MCF 10A (cell line): ENCODE measurements at regions of chr1 and their contacts with region 1.

Region 1: DNA sequence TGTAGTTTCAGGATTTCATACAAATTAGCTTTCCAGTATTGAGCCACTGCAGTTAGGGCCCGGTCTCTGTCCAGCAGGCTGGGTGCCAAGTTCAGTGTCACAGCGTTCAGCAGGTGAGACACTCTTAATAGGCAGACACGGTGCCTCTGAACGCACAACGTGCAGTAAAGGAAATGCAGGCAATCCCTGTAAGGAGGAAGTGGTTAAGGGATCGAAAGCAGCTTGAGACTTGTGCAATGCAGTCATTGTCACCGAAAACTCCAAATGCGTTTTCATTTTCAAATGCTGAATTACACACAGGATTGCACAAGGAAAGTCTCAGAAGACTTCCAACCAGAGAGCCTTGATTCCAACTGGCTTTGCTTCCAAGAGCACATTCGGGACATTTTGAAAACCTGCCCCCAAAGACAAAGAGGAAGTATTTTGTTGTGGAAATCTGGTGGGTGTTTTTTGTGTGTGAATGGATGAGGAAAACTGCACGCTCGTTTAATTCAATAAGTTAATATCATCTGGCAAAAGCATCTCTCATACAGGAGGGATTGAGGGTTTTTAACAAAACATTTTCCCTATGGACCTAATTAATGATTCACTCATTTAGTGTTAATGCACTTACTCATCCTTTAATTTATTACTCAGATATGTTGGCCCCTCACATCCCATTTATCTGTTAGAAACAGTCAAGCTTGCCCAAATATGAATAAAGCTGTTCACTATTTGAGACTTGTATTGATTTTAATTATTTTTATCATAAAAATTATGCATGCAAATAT is 61.6 kb downstream of the PTGS2 start:
- DNase-seq: peak; percentile 74
- H3K4me3 Mint-ChIP-seq: peak overlapping the region; percentile 56
- H3K27ac Mint-ChIP-seq: peak overlapping the region; percentile 46
- H3K4me1 Mint-ChIP-seq: peaks cover 15% of the 10 kb centered on the region
- H3K27me3 Mint-ChIP-seq: no peaks in the 10 kb centered on the region
- CTCF ChIP-seq: no peak

Region 2: GRCh38 chr1:186595969-186596368 is 22.6 kb before region 1 on chr1:
- CTCF ChIA-PET with region 1: interaction called, 11 read pairs
- POLR2A ChIA-PET with region 1: no interaction called
- intact Hi-C with region 1: no loop called
- DNase-seq: peak; percentile 45
- H3K4me3 Mint-ChIP-seq: no peak overlapping the region
- H3K27ac Mint-ChIP-seq: no peak overlapping the region
- H3K4me1 Mint-ChIP-seq: peaks cover 6% of the 10 kb centered on the region
- H3K27me3 Mint-ChIP-seq: no peaks in the 10 kb centered on the region
- CTCF ChIP-seq: no peak

Region 3: GRCh38 chr1:186643600-186643999 is 25.0 kb after region 1 on chr1:
- CTCF ChIA-PET with region 1: interaction called, 4 read pairs
- POLR2A ChIA-PET with region 1: no interaction called
- intact Hi-C with region 1: loop called (anchors 2 kb)
- DNase-seq: peak; percentile 86
- H3K4me3 Mint-ChIP-seq: no peak overlapping the region
- H3K27ac Mint-ChIP-seq: no peak overlapping the region
- H3K4me1 Mint-ChIP-seq: peaks cover 12% of the 10 kb centered on the region
- H3K27me3 Mint-ChIP-seq: no peaks in the 10 kb centered on the region
- CTCF ChIP-seq: no peak